ENCODE measurements at regions of chrX and their contacts with region 1.

Region 1: GRCh38 chrX:149631234-149632165 is at the start of gene TMEM185A:
- DNase-seq: peak; percentile 92
- total RNA-seq, gene TMEM185A: 20.8 to 22.1 TPM

Region 2: GRCh38 chrX:148643460-148643859 is 988.0 kb before region 1 on chrX:
- intact Hi-C with region 1: loop called in 1 of 2 experiments (anchors 5 kb)
- DNase-seq: no peak

Region 3: GRCh38 chrX:149453030-149453429 is 178.5 kb before region 1 on chrX:
- intact Hi-C with region 1: no loop called
- DNase-seq: no peak

Region 4: DNA sequence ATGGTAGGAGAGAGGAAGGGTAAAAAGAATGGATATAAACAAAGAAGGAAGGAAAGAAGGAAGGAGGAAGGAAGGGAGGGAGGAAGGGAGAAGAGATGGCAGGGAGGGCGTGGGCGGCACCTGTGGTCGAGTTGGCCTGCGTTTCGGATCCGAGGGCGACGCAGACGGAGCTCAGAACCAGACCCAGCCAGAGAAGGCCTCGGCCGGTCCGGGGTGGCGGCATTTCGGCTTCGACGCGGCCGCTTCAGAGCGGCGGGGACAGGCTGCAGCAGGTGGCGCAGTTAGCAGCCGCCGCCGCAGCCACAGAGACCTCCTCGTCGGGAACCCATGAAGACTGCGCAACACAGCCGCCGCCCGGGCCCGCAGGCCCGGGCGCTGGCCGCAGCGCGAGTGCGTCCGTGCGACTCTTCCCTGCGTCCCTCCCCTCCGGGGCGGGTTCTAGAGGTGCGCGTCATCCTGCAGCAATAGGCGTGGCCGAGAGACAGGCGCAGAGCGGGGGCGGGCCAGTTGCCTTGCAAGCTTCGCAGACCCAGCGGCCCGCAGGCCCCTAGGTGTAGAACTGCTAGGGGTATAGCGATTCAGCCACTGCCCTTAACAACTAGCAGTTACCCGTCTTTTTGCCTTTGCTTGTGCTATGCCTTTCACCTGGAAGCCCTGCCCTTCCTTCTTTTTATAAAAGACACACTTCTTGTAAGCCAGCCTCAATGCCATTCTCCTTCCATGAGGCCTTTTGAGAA is 126.4 kb before region 1 on chrX and contains the start of gene IDS:
- intact Hi-C with region 1: loop called in 1 of 2 experiments (anchors 10 kb)
- DNase-seq: peak; percentile 97
- total RNA-seq, gene IDS: 88.2 to 102 TPM